Right ventricle myocardium inferior (tissue), 1 donor: ENCODE measurements at regions of chr17 and their contacts with region 1.

Region 1: DNA sequence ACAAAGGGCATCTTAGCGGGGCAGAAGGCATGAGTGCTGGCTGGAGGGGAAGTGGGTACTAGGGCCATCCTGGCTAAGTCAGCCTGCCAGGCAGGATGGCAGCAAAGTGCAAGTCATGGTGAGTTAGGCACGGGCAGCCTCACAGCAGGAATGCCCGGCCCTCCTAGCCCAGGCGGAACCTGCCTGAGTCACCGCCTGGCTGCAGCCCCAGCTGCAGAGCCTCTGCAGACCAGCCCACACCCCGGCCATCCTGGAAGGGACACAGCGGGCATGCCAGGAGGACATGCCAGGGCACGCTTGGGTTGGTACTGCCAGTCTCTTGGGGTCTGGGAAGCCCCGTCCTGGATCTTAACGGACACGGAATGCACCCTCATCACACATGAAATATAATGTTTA is 4.9 kb upstream of the ALDH3A1 start:
- DNase-seq: peak; percentile 80
- ATAC-seq: peak; percentile 87

Region 2: DNA sequence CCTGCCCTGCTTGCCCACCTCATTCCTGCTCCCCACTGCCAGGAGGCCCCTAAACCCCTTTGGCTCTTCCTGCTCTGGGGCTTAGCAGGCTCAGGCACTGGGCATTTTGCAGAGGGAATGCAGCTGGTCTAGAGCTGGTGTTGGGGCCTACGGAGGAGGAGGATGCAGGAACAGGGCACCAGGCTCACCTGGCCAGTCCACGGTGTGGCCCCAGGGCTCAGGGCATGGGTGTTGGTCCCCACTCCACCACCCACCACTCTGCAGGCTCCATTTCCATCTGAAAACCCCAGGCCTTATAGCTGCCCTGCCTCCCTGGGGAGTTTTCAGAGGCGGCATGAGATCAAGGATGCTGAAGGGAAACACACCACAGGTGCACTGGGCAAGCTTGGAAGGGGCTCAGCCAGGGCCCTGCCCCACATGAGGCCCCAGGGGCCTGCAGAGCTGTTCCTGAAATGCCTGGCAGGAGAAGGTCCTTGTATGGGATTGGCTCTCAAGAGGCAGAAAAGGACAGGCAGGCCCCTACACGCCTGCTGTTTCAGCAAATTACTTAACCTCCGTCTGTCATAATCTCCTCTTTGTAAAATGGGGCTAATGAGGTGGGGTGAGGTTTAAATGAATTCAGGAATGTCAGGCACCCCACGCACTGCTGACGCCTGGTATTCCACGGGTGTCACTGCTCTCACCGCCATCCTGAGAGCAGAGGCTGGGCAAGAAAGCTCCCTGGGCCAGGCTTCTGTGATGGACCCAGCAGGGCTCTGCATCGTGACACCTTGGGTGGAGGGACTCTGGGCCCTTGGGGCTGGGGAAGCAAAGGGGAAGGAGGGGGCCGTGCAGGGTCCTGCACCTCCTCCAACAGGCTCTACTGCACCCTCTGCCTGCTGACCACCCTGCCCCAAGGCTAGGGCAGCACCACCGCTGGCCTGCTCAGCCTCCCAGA is 46.0 kb before region 1 on chr17:
- intact Hi-C with region 1: loop called (anchors 10 kb)
- DNase-seq: no peak
- ATAC-seq: no peak

Region 3: GRCh38 chr17:19718604-19719354 is 34.3 kb before region 1 on chr17:
- intact Hi-C with region 1: no loop called
- DNase-seq: peak; percentile 34
- ATAC-seq: no peak